ENCODE measurements at regions of chr22 and their contacts with region 1.

Region 1: DNA sequence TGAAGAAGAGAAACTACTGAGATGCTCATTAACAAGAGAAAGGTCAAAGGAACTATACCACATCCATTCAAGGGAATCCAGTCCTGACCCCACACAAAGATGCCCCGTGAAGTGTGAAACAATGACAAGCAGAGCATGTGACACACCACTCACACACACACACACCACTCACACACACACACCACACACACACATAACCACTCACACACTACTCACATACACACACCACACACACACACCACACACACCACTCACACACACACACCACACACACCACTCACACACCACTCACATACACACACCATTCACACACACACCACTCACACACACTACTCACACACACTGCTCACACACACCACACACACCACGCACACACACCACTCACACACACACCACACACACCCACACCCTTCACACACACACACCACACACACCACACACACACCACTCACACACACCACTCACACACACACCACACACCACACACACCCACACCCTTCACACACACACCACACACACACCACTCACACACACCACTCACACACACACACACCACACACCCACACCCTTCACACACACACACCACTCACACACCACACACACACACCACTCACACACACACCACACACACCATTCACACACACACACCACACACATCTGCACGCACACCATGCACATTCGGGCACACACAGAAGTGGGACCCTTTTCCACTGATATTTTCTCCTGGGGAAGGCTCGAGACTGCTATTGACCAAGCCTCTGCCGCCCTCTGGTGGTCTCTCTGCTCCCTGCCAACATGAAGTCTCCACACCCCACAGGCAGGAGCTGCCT is 32.0 kb upstream of the COMT start:
- DNase-seq: peak; percentile 78 to 90 (median 89)
- H3K4me3 ChIP-seq: no peak overlapping the region
- H3K27ac ChIP-seq: no peak overlapping the region
- H3K4me1 ChIP-seq: peaks cover 3% of the 10 kb centered on the region
- H3K27me3 ChIP-seq: no peaks in the 10 kb centered on the region
- CTCF ChIP-seq: peak; percentile 40 to 85 (median 80)
- EP300 ChIP-seq: no peak
- POLR2A ChIP-seq: no peak

Region 2: DNA sequence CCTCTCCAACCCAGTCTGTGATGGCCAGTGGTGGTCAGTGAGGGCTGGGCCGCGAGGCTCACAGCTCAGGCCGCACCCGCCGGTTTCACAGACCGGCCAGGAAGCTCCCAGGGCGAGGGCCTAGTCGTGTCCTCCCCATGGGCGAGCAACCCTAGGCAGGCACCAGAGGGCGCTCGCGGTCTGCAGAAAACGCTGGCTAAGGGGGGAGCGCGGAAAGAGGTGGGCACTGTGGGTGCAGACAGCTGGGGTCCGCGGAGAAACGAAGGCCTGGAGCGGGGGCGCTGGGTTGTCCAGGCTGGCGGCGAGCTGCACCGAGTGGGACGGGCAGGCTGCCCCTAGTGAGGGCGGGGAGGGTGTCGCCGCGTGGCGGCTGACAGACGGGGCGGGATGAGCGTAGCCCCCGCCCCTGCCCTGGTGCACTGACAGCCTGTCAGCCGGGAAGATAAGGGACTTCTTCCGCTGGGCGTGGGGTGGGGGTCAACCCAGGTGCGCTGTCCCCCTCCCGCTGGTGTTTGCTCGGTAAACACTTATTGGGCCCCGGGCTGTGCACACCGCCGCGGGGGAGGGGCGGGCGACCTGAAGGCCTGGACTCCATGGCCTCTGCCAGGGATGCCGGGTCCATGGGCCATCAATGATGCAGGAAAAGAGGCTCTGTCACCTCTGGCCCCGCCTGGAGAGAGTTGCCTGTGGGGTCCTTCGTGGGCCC is 178.8 kb before region 1 on chr22:
- intact Hi-C with region 1: loop called (anchors 2 to 5 kb)
- DNase-seq: peak; percentile 79 to 92 (median 89)
- H3K4me3 ChIP-seq: no peak overlapping the region
- H3K27ac ChIP-seq: no peak overlapping the region
- H3K4me1 ChIP-seq: no peaks in the 10 kb centered on the region
- H3K27me3 ChIP-seq: no peaks in the 10 kb centered on the region
- CTCF ChIP-seq: peak; percentile 89 to 97 (median 95)
- EP300 ChIP-seq: no peak
- POLR2A ChIP-seq: no peak

Region 3: DNA sequence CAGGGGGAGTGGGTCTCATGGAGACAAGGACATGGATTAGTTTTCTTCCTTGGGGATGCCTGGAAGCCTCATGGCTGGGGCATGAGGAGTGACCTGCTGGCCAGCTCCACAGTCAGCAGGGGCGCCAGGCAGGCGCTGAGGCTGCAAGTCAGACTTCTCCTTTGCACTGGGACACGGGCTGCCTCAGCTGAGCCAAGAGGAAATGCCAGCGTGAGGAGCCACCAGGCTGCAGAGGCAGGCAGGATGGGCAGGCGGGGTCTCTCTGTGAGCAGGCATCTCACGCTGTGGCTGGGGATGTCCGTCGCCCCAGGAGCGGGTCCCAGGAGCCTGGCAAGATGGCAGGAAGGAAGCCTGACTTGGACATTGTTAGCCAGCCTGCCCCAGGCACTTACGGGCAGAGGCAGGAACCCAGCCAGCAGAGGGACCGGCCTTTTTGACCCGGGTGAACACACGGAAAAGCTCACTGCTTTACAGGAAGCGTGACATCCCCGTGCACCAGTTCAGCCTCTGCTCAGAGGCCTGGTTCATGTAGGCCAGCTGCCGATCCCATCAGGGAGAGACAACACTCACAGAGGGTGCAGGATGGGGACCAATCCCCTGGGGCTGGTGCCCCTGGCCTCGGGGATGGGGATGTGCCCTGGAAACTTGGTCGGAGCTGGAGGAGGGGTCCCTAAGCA is 65.0 kb before region 1 on chr22:
- intact Hi-C with region 1: loop called in 1 of 4 experiments (anchors 10 kb)
- DNase-seq: no peak
- H3K4me3 ChIP-seq: no peak overlapping the region
- H3K27ac ChIP-seq: no peak overlapping the region
- H3K4me1 ChIP-seq: no peaks in the 10 kb centered on the region
- H3K27me3 ChIP-seq: no peaks in the 10 kb centered on the region
- CTCF ChIP-seq: no peak
- EP300 ChIP-seq: no peak
- POLR2A ChIP-seq: no peak

Region 4: DNA sequence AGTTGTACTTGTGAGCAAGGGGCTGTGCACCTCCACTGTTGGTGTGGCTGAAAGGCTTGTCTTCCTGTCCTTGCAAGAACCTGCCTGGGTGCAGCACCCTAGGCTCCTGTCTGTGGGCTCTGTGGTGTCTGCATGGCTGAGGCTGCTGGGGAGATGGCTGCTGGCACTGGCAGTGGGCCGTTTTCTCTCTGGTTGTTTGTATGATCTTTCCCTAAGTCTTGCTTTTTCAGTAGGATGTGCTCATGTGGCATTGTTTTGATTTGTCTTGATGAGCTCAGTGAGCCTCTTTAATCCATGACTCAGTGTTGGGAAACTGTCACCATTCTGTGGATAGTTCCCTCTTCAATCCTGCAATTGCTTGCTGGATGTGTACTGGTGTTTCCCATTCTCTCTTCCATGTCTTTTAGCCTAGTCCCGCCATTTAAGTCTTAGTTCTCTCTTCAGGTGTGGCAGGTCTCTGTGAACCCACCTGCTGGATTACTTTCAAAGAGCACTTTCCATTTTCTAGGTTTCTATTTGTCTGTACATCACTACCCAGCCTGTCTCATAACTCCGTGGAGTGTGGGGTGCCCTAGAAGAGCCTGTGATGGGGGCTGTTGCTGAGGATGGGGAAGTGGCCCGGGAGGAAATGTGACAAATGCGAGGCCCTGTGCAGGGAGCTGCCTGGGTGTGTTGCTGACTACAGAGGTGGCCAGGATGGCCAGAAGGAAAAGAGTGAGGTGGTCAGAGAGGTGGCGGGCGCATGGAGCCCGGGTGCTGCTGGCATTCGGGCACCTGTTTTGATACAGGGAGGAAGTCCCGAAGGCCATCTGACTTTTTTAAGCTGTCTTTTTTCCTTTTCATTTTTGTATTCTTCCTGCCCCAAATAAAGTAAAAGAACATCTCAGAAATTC is 181.0 kb after region 1 on chr22:
- intact Hi-C with region 1: no loop called
- DNase-seq: no peak
- H3K4me3 ChIP-seq: no peak overlapping the region
- H3K27ac ChIP-seq: no peak overlapping the region
- H3K4me1 ChIP-seq: no peaks in the 10 kb centered on the region
- H3K27me3 ChIP-seq: no peaks in the 10 kb centered on the region
- CTCF ChIP-seq: no peak
- EP300 ChIP-seq: no peak
- POLR2A ChIP-seq: no peak